Aorta (tissue), 5 donors: ENCODE measurements at regions of chr6 and their contacts with region 1.

Region 1: DNA sequence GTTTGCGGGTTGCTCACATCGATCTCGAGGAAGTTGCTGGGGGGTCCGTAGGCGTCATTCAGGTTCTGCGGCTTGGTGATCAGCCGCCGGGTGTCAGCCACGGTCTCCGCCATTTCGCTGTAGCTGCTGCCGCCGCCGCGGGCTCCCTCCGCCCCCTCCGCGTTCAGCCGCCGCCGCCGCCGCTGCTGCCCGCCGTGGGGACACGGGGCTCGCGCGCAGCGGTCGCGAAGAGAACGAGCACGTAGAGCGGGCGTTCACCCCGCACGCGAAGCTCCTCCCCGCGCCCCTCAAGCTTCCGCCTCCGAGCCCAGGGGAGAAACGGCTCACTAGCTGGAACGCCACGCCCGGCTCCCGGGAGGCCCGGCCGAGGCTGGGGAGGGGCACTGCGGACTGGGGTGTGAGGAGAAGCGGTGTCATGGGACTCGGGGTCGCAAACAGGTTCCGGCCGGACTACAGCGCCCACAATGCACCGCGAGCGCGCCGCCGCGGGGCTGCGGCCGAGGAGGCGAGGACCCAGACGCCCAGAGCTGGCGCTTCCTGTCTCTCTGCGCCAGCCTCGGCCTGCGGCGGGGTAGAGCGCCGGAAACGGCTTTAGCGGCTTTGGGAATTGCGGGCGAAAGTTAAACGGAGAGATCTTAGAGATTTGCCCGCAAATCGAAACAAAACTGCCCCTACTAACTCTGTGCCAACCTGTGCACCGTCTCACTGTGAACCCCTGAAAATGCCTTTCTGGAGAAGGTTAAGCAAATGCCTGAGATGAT is at the start of gene SNX3:
- DNase-seq: peak; percentile 97 to 98
- ATAC-seq: peak; percentile 98
- H3K4me3 ChIP-seq: peak within 1 kb of the TSS; percentile 74 to 76
- H3K27ac ChIP-seq: peak within 1 kb of the TSS; percentile 17 to 89
- H3K4me1 ChIP-seq: peaks cover 0 to 2% of the 10 kb centered on the region in 2 donors
- H3K27me3 ChIP-seq: no peaks in the 10 kb centered on the region
- total RNA-seq, gene SNX3: 148 to 156 TPM

Region 2: GRCh38 chr6:108074359-108075144 is 186.4 kb before region 1 on chr6 and contains the start of gene OSTM1:
- intact Hi-C with region 1: loop called in 1 of 2 experiments (anchors 2 kb)
- DNase-seq: peak; percentile 94 to 97
- ATAC-seq: peak; percentile 99
- H3K4me3 ChIP-seq: peak within 1 kb of the TSS; percentile 83 to 92
- H3K27ac ChIP-seq: peak within 1 kb of the TSS in 1 of 2 donors; percentile 69
- H3K4me1 ChIP-seq: no peaks in the 10 kb centered on the region
- H3K27me3 ChIP-seq: no peaks in the 10 kb centered on the region
- total RNA-seq, gene OSTM1: 45.0 to 68.3 TPM

Region 3: DNA sequence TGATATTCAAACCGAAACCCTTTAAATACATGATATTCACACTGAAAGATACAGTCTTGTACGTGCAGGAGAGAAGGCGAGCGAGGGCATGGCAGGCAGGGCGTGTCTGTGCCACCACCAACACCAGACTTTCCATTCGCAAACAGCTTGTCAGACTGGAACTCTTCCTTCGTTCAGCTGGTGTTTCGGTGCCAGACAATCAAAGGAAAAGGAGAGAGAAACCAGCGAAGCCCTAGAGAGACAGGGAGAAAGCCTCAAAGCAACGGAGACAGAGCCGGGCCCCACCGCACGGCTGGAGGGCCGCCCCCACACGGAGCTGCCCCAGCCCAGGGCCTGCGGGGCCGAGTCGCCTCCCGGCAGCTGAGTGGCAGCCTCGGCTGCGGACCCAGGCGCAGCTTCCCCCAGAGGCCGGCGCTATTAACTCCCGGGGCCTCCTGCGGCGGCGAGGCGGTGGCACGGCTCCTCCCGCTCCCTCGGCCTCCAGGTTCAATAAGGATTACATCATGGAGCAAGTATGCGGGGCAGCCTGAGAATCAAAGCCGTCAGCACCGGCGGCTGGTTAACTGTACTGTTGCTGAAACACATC is 127.3 kb before region 1 on chr6:
- intact Hi-C with region 1: loop called in 1 of 2 experiments (anchors 5 kb)
- DNase-seq: peak; percentile 64 to 84
- ATAC-seq: peak; percentile 63
- H3K4me3 ChIP-seq: peak overlapping the region; percentile 25 to 41
- H3K27ac ChIP-seq: peak overlapping the region in 1 of 2 donors; percentile 55
- H3K4me1 ChIP-seq: no peaks in the 10 kb centered on the region
- H3K27me3 ChIP-seq: no peaks in the 10 kb centered on the region

Region 4: GRCh38 chr6:108294727-108295625 is 34.0 kb after region 1 on chr6 and contains the start of gene AFG1L:
- intact Hi-C with region 1: loop called in 1 of 2 experiments (anchors 2 kb)
- DNase-seq: peak; percentile 96 to 97
- ATAC-seq: peak; percentile 98
- H3K4me3 ChIP-seq: peak within 1 kb of the TSS; percentile 64 to 80
- H3K27ac ChIP-seq: peak within 1 kb of the TSS in 1 of 2 donors; percentile 89
- H3K4me1 ChIP-seq: no peaks in the 10 kb centered on the region
- H3K27me3 ChIP-seq: no peaks in the 10 kb centered on the region
- total RNA-seq, gene AFG1L: 5.1 to 5.7 TPM